Posterior cingulate gyrus (tissue), 11 donors: ENCODE measurements at regions of chr3 and their contacts with region 1.

Region 1: GRCh38 chr3:58332575-58333188 is at the start of gene PXK:
- DNase-seq: peak; percentile 79 to 98 (median 88)

Region 2: DNA sequence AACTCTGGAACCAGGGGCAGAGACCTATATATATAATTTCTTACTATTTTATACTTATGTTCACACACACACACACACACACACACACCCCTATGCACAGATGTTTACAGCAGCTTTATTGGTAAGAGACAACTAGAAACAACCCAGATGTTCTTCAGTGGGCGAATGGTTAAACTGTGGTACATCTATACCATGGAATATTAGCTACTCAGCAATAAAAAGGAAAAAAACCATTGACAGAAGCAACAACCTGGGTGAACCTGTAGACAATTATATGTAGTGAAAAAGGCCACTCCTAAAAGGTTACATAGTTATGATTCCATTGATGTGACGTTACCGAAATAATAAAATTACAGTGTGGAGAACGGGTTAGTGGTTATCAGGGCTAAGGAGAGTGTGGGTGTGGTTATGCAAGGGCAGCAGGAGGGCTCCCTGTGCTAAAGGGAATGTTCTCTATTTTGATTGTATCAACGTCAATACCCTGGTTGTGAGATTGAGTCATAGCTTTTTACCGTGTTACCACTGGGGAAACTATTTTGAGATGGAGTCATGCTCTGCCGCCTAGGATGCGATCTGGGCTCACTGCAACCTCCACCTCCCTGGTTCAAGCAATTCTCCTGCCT is 239.0 kb before region 1 on chr3:
- intact Hi-C with region 1: no loop called
- DNase-seq: no peak

Region 3: GRCh38 chr3:58383904-58384303 is 51.2 kb after region 1 on chr3:
- intact Hi-C with region 1: loop called (anchors 10 kb)
- DNase-seq: no peak

Region 4: DNA sequence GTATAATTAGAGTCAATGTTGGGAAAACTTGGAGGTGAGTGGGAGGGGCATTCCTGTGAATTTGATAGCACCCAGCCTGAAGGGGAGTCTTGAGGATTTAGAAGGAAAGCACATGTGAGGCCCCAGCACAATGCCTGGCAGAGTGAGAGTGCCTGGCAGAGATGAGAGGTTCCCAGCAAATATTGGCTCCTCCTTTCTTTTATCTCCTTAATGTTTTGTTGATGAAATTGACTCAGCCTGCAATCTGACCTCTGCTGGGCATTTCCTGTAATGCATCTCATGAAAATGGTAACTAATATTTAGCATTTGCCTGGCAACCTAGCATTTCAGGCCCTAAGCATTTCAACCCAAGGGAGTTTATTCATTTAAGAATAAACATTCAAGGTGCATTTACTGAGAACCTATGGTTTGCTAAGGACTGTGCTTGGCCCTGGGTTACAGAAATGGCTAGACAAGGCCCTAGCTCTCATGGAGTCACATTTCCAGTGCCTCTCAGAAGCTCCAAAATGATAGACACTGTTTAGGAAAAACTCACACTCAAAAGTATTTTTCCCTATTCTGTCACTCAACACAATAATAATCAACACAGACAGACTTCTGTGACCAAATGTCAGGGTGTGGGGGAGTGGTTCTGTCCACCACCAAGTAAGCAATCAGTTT is 82.0 kb after region 1 on chr3:
- intact Hi-C with region 1: loop called (anchors 2 kb)
- DNase-seq: peak in 3 of 10 donors; percentile 27 to 65 (median 38)

Region 5: DNA sequence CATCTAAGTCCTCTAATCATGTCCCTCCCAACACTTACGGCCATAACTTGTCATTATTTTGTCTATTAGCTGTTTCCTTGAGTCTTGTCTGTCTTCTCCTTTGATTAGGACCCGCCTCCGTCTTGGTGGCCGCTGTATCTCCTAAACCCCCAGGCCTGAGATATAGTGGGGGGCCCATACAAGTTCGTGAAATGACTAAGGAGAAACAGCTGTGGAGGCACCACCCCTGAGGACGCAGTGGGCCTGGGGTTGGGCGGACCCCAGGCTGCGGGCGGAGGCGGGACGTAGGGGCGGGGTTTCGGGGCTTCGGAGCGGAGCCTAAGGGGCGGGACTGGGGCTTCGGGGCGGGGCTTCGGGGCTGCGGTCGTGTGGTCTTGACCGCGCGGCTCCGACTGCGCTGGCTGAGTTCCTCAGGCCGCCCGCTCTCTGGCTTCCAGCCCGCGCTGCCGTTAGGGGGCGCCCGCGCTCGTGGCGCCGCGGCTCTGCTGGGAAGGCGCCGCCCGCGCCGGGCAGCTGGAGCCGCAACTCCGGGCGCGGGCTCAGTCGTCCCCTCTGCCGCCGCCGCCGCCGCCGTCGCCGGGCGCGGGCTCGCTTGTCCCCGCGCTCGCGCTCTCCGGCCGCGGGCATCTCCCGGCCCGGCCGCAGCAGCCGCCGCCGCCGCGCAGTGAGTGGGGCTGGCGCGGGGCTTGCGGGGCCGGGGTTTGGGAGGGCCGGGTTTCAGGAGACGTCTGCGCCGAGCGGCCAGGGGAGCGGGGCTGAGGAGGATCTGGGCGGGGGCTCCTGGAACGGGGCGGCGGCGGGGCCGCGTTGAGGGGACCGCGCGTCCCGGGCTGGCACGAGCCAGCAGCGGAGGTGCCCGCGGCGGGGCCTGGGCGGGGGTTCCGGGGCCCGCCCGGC is 159.1 kb after region 1 on chr3 and contains the start of gene KCTD6:
- intact Hi-C with region 1: loop called (anchors 2 kb)
- DNase-seq: peak; percentile 79 to 98 (median 84)